B cell (primary cell): ENCODE measurements at regions of chr12 and their contacts with region 1.

Region 1: DNA sequence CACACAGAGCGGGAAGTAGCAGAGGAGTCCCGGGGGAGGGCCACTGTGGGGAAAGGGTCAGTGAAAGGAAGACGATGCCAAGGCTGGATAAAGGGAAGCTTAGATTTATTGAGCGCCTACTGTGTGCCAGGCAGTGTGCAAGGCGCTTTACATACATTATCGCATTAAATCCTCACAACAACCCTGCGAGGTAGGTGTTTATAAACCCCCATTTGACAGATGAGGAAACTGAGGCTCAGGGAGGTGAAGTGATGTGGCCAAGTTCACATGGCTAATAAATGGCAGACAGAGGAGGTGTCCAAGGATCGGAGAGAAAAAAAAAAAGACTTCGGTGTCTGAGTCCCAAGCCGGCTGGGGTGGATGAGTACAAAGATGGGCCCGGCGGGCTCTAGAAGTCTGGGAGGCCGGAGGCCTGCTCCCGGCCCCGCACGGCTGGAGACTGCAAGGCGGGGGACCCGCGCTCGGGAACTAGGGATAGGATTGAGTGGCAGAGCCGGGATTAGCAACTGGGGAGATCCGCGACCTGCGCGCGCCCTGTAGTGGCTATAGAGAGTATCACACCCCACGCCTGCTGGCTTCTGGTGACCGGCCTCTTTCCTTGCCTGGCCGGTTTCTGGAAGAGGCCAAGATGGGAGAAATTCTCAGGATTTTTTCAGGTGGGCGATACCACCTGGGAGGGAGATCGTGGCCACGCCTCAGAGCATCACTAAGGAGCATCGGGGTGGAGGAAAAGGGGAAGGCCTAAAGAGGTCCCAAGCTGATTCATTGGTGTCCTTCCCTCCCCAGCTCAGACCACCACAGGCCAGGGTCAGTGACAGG is 3.9 kb downstream of the DDN start:
- DNase-seq: peak; percentile 72
- ATAC-seq: peak; percentile 26
- H3K4me3 ChIP-seq: peak overlapping the region in 1 of 5 experiments; percentile 23
- H3K4me3 Mint-ChIP-seq: peak overlapping the region; percentile 59
- H3K27ac ChIP-seq: no peak overlapping the region
- H3K27ac Mint-ChIP-seq: no peak overlapping the region
- H3K4me1 ChIP-seq: peaks cover 37 to 44% of the 10 kb centered on the region in 2 donors
- H3K4me1 Mint-ChIP-seq: peaks cover 40% of the 10 kb centered on the region
- H3K27me3 ChIP-seq: peaks cover 0 to 72% (median 33%) of the 10 kb centered on the region in 4 experiments
- H3K27me3 Mint-ChIP-seq: peaks cover 32% of the 10 kb centered on the region
- CTCF ChIP-seq: peak; percentile 86

Region 2: DNA sequence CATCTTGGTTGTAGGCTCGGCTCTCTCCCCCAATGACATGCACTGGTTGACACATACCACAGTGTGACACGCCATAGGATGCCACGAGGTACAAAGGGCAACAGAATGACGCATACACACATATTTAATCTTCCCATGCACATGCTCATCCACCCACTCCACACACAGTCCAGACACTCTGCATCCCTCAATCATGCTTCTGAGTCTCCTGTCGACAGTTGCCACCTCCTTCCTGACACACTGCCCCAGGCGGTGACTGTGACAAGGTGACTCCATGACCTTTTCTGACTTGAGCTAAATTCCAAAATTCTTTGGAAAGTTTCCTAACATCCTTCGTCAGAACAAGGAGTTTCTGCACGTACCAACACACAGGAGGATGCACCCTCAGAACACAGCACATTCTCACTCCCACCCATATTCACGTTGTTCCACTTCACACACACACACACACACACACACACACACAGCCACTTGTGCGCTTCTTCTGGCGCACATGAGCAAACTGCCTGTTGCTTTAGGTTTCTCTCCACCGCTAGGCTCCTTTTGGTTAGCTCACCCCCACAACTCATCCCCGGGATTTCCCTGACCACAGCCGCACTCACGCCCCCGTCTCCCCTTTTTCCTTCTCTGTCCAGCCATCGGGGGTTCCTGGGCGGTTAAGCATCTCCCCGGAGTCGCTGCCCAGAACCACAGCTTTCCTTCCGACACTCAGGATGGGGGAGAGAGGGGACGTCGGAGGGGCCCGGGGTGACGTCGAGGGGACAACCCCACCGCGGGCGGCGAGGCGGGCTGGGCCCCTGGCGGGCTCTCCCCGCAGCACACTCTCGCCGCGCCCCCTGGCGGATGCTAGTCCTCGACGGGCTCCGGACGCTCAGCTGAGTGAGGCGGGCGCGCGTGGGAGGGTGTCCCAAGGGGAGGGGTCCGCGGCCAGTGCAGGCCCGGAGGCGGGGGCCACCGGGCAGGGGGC is 17.7 kb before region 1 on chr12:
- CTCF ChIA-PET with region 1: interaction called, 12 read pairs
- POLR2A ChIA-PET with region 1: interaction called, 12 read pairs
- intact Hi-C with region 1: loop called (anchors 2 kb)
- DNase-seq: peak; percentile 90
- ATAC-seq: peak; percentile 69
- H3K4me3 ChIP-seq: peak overlapping the region in 3 of 5 experiments; percentile 60 to 86 (median 65)
- H3K4me3 Mint-ChIP-seq: peak overlapping the region; percentile 72
- H3K27ac ChIP-seq: no peak overlapping the region
- H3K27ac Mint-ChIP-seq: peak overlapping the region; percentile 73
- H3K4me1 ChIP-seq: peaks cover 55 to 56% of the 10 kb centered on the region in 2 donors
- H3K4me1 Mint-ChIP-seq: peaks cover 57% of the 10 kb centered on the region
- H3K27me3 ChIP-seq: peaks cover 2 to 90% (median 54%) of the 10 kb centered on the region in 4 experiments
- H3K27me3 Mint-ChIP-seq: peaks cover 74% of the 10 kb centered on the region
- CTCF ChIP-seq: peak; percentile 92

Region 3: DNA sequence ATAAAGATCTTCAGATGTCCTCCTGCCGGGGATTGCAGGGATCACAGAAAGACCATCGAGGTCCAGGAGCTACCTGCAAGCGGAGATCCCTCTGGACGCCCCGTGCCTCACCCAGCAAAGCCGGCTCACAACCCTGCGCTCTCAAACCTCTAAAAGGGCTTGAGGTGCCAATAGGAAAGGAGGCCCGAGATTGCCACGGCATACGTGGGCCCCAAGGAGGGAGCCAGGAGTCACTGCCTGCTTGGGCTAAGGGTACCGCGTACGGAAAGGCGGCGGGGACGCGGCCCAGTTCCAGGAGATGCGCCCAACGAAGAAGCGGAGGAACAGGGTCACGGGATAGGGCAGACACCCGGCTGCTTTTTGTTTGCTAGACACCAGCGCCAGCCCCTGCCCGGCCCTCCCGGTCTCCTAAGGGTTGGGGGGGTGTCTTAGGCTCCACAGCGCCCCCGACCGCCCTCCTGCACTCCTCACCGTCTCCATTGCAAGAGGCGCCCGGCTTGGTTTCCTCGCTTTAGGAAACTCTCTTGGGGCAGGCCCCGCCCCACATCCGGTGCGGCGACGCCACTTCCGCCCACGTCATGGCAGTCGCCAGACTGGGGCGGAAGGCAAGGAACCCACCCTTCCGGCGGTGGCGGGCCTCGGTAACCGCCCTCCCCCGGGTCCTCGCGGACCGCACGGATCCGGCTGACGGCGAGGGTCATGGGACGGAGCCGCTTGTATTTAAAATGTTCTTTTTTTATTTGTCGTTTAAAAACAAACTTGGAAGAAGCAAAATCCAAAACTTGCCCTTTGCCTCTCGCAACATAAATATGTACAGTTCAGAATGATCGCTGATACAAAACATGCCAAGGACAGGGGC is 23.2 kb after region 1 on chr12 and contains the start of gene PRKAG1:
- CTCF ChIA-PET with region 1: interaction called, 61 read pairs
- POLR2A ChIA-PET with region 1: interaction called, 19 read pairs
- intact Hi-C with region 1: loop called (anchors 1 kb)
- DNase-seq: peak; percentile 98
- ATAC-seq: peak; percentile 88
- H3K4me3 ChIP-seq: peak within 1 kb of the TSS; percentile 79 to 88 (median 86)
- H3K4me3 Mint-ChIP-seq: peak within 1 kb of the TSS; percentile 91
- H3K27ac ChIP-seq: peak within 1 kb of the TSS; percentile 95 to 99
- H3K27ac Mint-ChIP-seq: peak within 1 kb of the TSS; percentile 98
- H3K4me1 ChIP-seq: peaks cover 18 to 21% of the 10 kb centered on the region in 2 donors
- H3K4me1 Mint-ChIP-seq: peaks cover 29% of the 10 kb centered on the region
- H3K27me3 ChIP-seq: no peaks in the 10 kb centered on the region
- H3K27me3 Mint-ChIP-seq: no peaks in the 10 kb centered on the region
- CTCF ChIP-seq: peak; percentile 74
- total RNA-seq, gene PRKAG1: 58.6 and 60.0 TPM in 2 replicates

Region 4: DNA sequence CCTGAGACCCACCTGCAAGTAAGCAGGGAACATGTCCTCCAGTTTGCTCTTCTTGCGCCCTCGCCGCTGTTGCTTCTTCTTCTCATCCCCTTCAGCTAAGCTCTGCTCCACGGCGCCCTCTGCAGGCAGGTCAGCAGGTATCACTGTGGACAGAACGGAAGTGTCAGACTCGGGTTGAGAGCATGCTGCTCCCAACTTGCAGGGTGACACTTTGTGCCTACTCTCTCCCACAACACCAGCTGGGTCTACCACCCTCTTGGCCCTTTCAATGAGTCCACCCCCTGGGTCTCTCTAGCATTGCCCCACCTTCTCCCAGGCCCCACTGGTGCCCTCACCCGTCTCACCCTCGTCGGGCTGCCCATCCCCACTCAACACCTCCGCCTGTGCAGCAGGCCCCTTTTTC is 48.6 kb after region 1 on chr12:
- CTCF ChIA-PET with region 1: interaction called, 22 read pairs
- POLR2A ChIA-PET with region 1: no interaction called
- intact Hi-C with region 1: no loop called
- DNase-seq: peak; percentile 79
- ATAC-seq: peak; percentile 78
- H3K4me3 ChIP-seq: no peak overlapping the region
- H3K4me3 Mint-ChIP-seq: no peak overlapping the region
- H3K27ac ChIP-seq: no peak overlapping the region
- H3K27ac Mint-ChIP-seq: peak overlapping the region; percentile 3
- H3K4me1 ChIP-seq: no peaks in the 10 kb centered on the region
- H3K4me1 Mint-ChIP-seq: peaks cover 2% of the 10 kb centered on the region
- H3K27me3 ChIP-seq: no peaks in the 10 kb centered on the region
- H3K27me3 Mint-ChIP-seq: no peaks in the 10 kb centered on the region
- CTCF ChIP-seq: peak; percentile 80

Region 5: GRCh38 chr12:49088190-49088931 is 93.1 kb after region 1 on chr12:
- CTCF ChIA-PET with region 1: interaction called, 16 read pairs
- POLR2A ChIA-PET with region 1: no interaction called
- intact Hi-C with region 1: loop called (anchors 2 kb)
- DNase-seq: peak; percentile 88
- ATAC-seq: peak; percentile 92
- H3K4me3 ChIP-seq: peak overlapping the region in 1 of 5 experiments; percentile 10
- H3K4me3 Mint-ChIP-seq: peak overlapping the region; percentile 70
- H3K27ac ChIP-seq: no peak overlapping the region
- H3K27ac Mint-ChIP-seq: no peak overlapping the region
- H3K4me1 ChIP-seq: peaks cover 47 to 48% of the 10 kb centered on the region in 2 donors
- H3K4me1 Mint-ChIP-seq: peaks cover 38% of the 10 kb centered on the region
- H3K27me3 ChIP-seq: peaks cover 0 to 57% (median 37%) of the 10 kb centered on the region in 4 experiments
- H3K27me3 Mint-ChIP-seq: peaks cover 46% of the 10 kb centered on the region
- CTCF ChIP-seq: peak; percentile 96